GM10248 (cell line): ENCODE measurements at regions of chr5 and their contacts with region 1.

Region 1: GRCh38 chr5:101176605-101177004 is 273.5 kb upstream of the ST8SIA4 start:
- DNase-seq: no peak
- CTCF ChIP-seq: no peak

Region 2: GRCh38 chr5:100992354-100992753 is 184.3 kb before region 1 on chr5:
- CTCF ChIA-PET with region 1: no interaction called
- POLR2A ChIA-PET with region 1: no interaction called
- DNase-seq: no peak
- CTCF ChIP-seq: no peak

Region 3: GRCh38 chr5:101163088-101163487 is 13.5 kb before region 1 on chr5:
- CTCF ChIA-PET with region 1: interaction called, 10 read pairs
- POLR2A ChIA-PET with region 1: no interaction called
- DNase-seq: no peak
- CTCF ChIP-seq: no peak

Region 4: GRCh38 chr5:101212942-101213514 is 36.4 kb after region 1 on chr5:
- CTCF ChIA-PET with region 1: no interaction called
- POLR2A ChIA-PET with region 1: no interaction called
- DNase-seq: no peak
- CTCF ChIP-seq: no peak